Heart left ventricle (tissue), 16 donors: ENCODE measurements at regions of chr20 and their contacts with region 1.

Region 1: GRCh38 chr20:42530822-42531448 is 658.8 kb downstream of the PTPRT start:
- DNase-seq: no peak
- ATAC-seq: peak in 1 of 4 donors; percentile 38
- H3K4me3 ChIP-seq: no peak overlapping the region
- H3K27ac ChIP-seq: no peak overlapping the region
- H3K4me1 ChIP-seq: peaks cover 0 to 10% (median 0%) of the 10 kb centered on the region in 12 donors
- H3K27me3 ChIP-seq: no peaks in the 10 kb centered on the region
- CTCF ChIP-seq: peak; percentile 49 to 80 (median 70)
- POLR2A ChIP-seq: no peak

Region 2: DNA sequence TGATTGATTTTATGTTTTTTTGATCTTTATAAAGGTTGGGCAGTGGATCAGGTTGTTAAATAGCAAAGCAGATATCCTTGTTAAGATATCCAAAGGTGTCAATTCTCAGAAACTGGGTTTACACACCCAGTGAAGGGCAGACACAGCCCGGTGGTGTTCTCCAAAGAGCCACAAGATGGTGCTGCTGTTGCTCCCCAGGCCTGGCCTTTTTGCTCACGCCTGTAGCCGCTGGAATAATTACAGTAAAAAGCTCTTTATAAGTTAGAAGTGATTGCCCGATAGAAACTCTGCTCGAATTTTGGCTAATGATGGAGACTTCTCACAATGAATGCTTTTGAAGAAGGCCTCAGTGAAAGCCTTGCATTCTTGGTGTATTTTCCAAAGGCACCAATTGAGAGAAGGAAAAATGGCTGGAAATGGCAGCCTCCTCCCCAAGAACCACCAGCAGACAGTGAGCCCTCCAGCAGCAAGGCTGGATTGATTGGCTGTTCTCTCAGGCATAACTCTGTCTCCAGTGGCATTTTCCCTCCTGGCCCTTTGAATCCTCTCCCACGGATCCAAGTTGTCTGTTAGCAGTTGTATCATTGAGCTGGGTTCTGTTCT is 792.2 kb before region 1 on chr20:
- intact Hi-C with region 1: loop called in 5 of 10 experiments (anchors 2 to 10 kb)
- DNase-seq: peak in 3 of 5 donors; percentile 21 to 41 (median 25)
- ATAC-seq: peak in 3 of 4 donors; percentile 67 to 80 (median 69)
- H3K4me3 ChIP-seq: no peak overlapping the region
- H3K27ac ChIP-seq: no peak overlapping the region
- H3K4me1 ChIP-seq: no peaks in the 10 kb centered on the region
- H3K27me3 ChIP-seq: no peaks in the 10 kb centered on the region
- CTCF ChIP-seq: peak; percentile 63 to 84 (median 76)
- POLR2A ChIP-seq: no peak

Region 3: DNA sequence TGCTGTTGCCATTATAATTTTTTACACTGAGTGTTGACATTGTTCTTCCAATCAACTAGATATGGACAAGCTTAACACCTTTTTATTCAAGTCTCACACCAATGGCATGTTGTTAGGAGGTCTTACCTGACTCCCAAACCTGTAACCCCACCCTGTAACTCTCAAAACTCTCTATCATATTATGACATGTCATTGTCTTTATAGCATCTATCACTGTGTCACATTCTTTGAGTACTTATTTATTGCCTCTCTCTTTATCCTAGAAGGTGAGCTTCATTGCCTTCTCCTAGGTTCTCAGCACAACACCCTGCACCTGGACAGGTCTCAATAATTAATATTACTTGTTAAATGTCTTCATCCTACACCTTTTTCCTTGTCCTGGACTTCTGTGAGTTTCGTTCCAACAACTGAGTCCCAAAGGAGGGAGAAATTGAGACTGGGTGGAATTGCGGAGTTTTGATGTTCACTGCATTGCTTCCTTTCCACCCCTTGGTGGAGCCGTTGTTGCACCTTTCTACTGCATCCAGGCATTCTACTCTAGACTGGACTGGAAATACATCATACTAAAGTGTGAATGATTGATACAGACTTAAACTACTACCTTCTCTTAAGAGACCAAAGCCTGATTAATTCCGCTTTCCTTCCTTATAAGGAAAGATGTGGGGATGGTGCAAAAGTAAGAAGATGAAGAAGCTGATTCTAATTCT is 574.8 kb before region 1 on chr20:
- intact Hi-C with region 1: loop called in 3 of 10 experiments (anchors 5 to 10 kb)
- DNase-seq: no peak
- ATAC-seq: no peak
- H3K4me3 ChIP-seq: no peak overlapping the region
- H3K27ac ChIP-seq: no peak overlapping the region
- H3K4me1 ChIP-seq: no peaks in the 10 kb centered on the region
- H3K27me3 ChIP-seq: peaks cover 0 to 8% (median 0%) of the 10 kb centered on the region in 9 donors
- CTCF ChIP-seq: peak in 10 of 12 donors; percentile 20 to 57 (median 42)
- POLR2A ChIP-seq: no peak

Region 4: GRCh38 chr20:42191143-42191917 is 339.6 kb before region 1 on chr20:
- intact Hi-C with region 1: loop called in 1 of 10 experiments (anchors 10 kb)
- DNase-seq: no peak
- ATAC-seq: no peak
- H3K4me3 ChIP-seq: no peak overlapping the region
- H3K27ac ChIP-seq: no peak overlapping the region
- H3K4me1 ChIP-seq: no peaks in the 10 kb centered on the region
- H3K27me3 ChIP-seq: no peaks in the 10 kb centered on the region
- CTCF ChIP-seq: peak in 2 of 12 donors; percentile 8 to 23
- POLR2A ChIP-seq: no peak

Region 5: DNA sequence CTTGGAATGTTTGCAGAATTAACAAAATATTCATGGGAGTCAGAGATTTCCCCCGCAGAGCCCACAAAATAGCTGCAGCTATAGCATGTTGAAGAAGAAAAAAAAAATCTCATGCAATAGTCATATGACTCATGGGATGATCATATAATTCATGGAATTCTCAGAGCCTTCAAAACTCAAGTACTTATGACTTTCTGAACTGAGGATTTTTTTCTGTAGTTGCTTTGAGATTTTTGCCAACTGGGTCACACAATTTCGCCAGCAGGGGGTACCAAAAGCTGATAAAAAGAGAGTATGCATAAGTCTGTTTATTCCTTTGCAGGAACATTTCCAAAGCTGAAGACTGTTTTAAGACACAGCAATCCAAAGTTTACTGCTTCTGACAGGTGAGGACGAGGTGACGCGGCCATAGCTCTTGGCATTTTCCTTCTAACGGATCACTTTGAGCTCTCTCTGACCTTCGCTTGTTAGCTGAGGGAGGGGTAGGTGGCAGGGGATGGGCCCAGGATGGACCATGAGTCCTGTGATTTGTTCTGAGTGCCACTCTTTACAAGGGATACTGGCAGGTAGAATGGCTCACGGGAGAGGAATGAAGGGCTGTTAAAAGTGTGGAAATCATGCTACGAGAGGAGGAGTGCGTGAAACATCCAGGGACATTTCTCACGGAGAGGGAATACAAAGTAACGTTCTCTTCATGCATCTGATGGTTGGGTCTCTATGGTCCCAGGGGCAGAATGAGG is 326.6 kb before region 1 on chr20:
- intact Hi-C with region 1: loop called in 8 of 10 experiments (anchors 2 to 10 kb)
- DNase-seq: no peak
- ATAC-seq: no peak
- H3K4me3 ChIP-seq: no peak overlapping the region
- H3K27ac ChIP-seq: no peak overlapping the region
- H3K4me1 ChIP-seq: peaks cover 0 to 7% (median 0%) of the 10 kb centered on the region in 12 donors
- H3K27me3 ChIP-seq: no peaks in the 10 kb centered on the region
- CTCF ChIP-seq: peak in 11 of 12 donors; percentile 25 to 62 (median 44)
- POLR2A ChIP-seq: no peak

Region 6: GRCh38 chr20:42576191-42576590 is 45.3 kb after region 1 on chr20:
- intact Hi-C with region 1: no loop called
- DNase-seq: no peak
- ATAC-seq: no peak
- H3K4me3 ChIP-seq: no peak overlapping the region
- H3K27ac ChIP-seq: no peak overlapping the region
- H3K4me1 ChIP-seq: no peaks in the 10 kb centered on the region
- H3K27me3 ChIP-seq: no peaks in the 10 kb centered on the region
- CTCF ChIP-seq: no peak
- POLR2A ChIP-seq: no peak